ENCODE measurements at regions of chr17 and their contacts with region 1.

Region 1: DNA sequence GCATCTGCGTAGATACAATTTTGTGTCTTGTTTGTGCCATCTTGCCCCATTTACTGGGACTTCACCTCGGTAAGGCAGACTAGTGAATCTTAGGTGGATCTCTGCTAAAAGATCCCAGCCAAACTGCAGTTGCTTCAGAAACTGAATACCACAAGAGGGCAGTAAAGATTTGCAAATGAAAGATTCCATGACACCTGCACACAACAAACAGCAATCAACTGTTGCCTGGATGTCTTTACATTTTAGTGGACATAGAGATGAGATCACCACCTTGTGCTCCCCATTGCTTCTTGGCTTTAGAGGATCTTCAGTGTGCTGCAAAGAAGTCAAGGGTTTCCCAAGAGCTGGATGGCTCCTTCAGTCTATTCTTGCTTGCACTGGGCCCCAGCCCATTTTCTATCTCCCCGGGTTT is 119.2 kb upstream of the CACNG5 start:
- DNase-seq: peak; percentile 14 to 60
- H3K4me3 ChIP-seq: no peak overlapping the region
- H3K27ac ChIP-seq: no peak overlapping the region
- H3K4me1 ChIP-seq: peaks cover 14% of the 10 kb centered on the region
- H3K27me3 ChIP-seq: no peaks in the 10 kb centered on the region
- CTCF ChIP-seq: peak; percentile 83

Region 2: GRCh38 chr17:66727639-66728570 is 12.2 kb after region 1 on chr17:
- CTCF ChIA-PET with region 1: no interaction called
- POLR2A ChIA-PET with region 1: no interaction called
- intact Hi-C with region 1: no loop called
- DNase-seq: peak in 1 of 2 experiments; percentile 40
- H3K4me3 ChIP-seq: no peak overlapping the region
- H3K27ac ChIP-seq: no peak overlapping the region
- H3K4me1 ChIP-seq: 0 out of 2 replicates have a peak, but pooled peaks cover 5% of the 10 kb centered on the region
- H3K27me3 ChIP-seq: no peaks in the 10 kb centered on the region
- CTCF ChIP-seq: peak; percentile 68

Region 3: DNA sequence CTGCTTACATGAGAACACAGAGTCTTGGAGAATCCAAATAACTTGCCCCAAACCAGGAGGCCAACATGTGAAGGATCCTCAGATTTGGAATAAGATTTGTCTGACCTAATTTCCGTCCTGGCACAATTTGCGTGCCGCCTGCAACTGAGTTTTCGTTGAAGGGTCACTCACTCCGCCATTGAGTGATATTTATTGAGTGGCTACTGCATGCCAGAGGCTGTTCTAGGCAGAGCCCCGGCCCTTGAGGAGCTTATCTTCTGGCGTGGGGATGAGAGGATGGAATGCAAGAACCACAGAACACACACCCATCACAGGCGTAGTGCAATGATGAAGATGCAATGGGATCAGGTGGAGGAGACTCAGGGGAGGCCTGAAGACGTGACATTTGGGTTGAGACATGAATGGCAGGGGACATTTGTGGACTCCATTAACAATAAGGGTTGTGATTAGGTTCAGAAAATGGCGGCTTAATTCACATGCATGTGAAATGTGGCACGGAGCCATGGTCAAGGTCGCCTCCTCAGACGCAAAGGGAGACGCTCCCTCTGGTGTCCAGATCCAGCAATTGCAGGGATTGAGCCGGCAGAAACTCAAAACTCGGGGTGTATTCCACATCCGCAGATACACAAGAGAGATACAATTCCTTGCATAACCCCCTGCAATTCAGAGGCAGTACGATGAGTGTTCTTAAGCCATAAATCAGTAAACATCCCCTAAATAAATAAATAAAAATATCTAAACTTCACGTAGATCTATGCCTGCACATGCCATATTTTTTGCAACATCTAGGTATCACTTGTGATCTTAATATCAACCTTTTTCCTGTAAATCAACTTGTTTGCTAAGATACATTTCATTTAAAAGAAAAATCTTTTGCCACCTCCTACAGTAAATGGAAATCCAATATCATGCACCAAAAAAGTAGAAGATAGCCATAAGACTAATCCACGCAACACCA is 190.8 kb after region 1 on chr17:
- CTCF ChIA-PET with region 1: no interaction called
- POLR2A ChIA-PET with region 1: no interaction called
- intact Hi-C with region 1: loop called (anchors 1 kb)
- DNase-seq: peak; percentile 56 to 65
- H3K4me3 ChIP-seq: no peak overlapping the region
- H3K27ac ChIP-seq: no peak overlapping the region
- H3K4me1 ChIP-seq: no peaks in the 10 kb centered on the region
- H3K27me3 ChIP-seq: no peaks in the 10 kb centered on the region
- CTCF ChIP-seq: peak; percentile 97

Region 4: DNA sequence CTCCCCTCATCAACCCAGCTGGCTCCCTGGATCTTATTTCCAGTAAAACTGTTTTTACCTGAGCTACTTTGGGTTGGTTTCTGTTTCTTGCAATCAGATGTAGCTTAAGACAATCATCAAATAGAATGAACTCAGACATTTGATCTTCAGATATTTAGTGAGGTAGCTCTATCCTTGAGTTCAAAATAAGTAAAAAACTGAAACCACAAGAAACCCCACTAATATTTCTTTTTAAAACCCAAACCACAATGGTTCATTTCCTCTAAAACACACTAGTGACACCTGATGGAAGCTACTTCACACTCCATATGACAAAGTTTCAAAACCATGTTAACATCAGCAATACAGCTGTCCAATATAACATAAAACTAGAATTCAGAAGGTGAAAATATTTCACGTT is 366.4 kb after region 1 on chr17:
- CTCF ChIA-PET with region 1: no interaction called
- POLR2A ChIA-PET with region 1: no interaction called
- intact Hi-C with region 1: loop called (anchors 5 kb)
- DNase-seq: no peak
- H3K4me3 ChIP-seq: no peak overlapping the region
- H3K27ac ChIP-seq: no peak overlapping the region
- H3K4me1 ChIP-seq: no peaks in the 10 kb centered on the region
- H3K27me3 ChIP-seq: no peaks in the 10 kb centered on the region
- CTCF ChIP-seq: no peak

Region 5: GRCh38 chr17:67157732-67158639 is 442.2 kb after region 1 on chr17:
- CTCF ChIA-PET with region 1: interaction called, 3 read pairs
- POLR2A ChIA-PET with region 1: no interaction called
- intact Hi-C with region 1: loop called (anchors 5 kb)
- DNase-seq: no peak
- H3K4me3 ChIP-seq: no peak overlapping the region
- H3K27ac ChIP-seq: no peak overlapping the region
- H3K4me1 ChIP-seq: no peaks in the 10 kb centered on the region
- H3K27me3 ChIP-seq: no peaks in the 10 kb centered on the region
- CTCF ChIP-seq: peak; percentile 46; the same call in 1 of the 2 replicates

Measured in PC-9 (cell line).